Naive thymus-derived CD4-positive, alpha-beta T cell (primary cell): ENCODE measurements at regions of chr3 and their contacts with region 1.

Region 1: DNA sequence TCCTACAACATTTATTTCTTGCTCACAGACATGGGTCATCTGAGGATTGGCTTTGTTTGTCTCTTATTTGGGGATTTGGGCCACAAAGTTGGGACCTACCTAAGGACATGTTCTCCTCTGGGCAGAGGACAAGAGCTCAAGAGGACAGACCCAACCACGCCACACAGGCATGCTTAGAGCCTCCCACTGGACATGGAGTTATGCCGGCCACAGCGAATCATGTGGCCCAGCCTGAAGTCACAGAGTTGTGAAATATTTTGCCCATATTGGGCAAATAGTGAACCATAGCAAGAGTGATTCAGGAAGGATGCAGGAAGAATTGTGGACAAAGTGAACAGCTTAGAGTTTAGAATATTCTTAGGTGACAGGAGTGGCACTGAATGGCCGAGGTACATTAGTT is 9.9 kb downstream of the TRAK1 start:
- DNase-seq: no peak
- ATAC-seq: peak; percentile 46
- H3K4me3 ChIP-seq: no peak overlapping the region
- H3K4me3 Mint-ChIP-seq: no peak overlapping the region
- H3K27ac ChIP-seq: no peak overlapping the region
- H3K27ac Mint-ChIP-seq: no peak overlapping the region
- H3K4me1 ChIP-seq: no peaks in the 10 kb centered on the region
- H3K4me1 Mint-ChIP-seq: peaks cover 0 to 23% (median 10%) of the 10 kb centered on the region in 7 donors
- H3K27me3 ChIP-seq: no peaks in the 10 kb centered on the region
- H3K27me3 Mint-ChIP-seq: no peaks in the 10 kb centered on the region

Region 2: GRCh38 chr3:41893977-41894376 is 207.1 kb before region 1 on chr3:
- CTCF ChIA-PET with region 1: interaction called, 15 read pairs
- POLR2A ChIA-PET with region 1: no interaction called
- intact Hi-C with region 1: loop called (anchors 1 kb)
- DNase-seq: peak in 6 of 9 donors; percentile 9 to 34 (median 17)
- ATAC-seq: no peak
- H3K4me3 ChIP-seq: no peak overlapping the region
- H3K4me3 Mint-ChIP-seq: no peak overlapping the region
- H3K27ac ChIP-seq: no peak overlapping the region
- H3K27ac Mint-ChIP-seq: no peak overlapping the region
- H3K4me1 ChIP-seq: no peaks in the 10 kb centered on the region
- H3K4me1 Mint-ChIP-seq: peaks cover 0 to 6% (median 0%) of the 10 kb centered on the region in 7 donors
- H3K27me3 ChIP-seq: no peaks in the 10 kb centered on the region
- H3K27me3 Mint-ChIP-seq: no peaks in the 10 kb centered on the region

Region 3: DNA sequence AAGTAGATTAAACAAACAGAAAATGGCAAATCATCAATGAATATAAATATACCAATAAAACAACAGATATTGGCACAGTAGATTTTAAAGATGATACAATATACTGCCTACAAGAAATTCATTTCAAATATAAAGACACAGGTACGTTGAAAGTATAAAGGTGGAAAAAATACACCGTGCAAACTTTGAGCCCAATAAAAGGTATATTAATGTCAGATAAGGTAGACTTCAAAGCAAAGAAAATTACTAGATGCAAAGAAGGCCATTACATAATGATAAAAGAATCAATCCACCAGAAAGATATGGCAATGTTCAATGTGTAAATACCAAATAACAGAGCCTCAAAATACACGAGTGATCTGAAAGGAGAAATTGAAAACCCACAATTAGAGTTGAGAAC is 367.1 kb after region 1 on chr3:
- CTCF ChIA-PET with region 1: no interaction called
- POLR2A ChIA-PET with region 1: no interaction called
- intact Hi-C with region 1: no loop called
- DNase-seq: no peak
- ATAC-seq: no peak
- H3K4me3 ChIP-seq: no peak overlapping the region
- H3K4me3 Mint-ChIP-seq: no peak overlapping the region
- H3K27ac ChIP-seq: no peak overlapping the region
- H3K27ac Mint-ChIP-seq: no peak overlapping the region
- H3K4me1 ChIP-seq: no peaks in the 10 kb centered on the region
- H3K4me1 Mint-ChIP-seq: no peaks in the 10 kb centered on the region
- H3K27me3 ChIP-seq: no peaks in the 10 kb centered on the region
- H3K27me3 Mint-ChIP-seq: peaks cover 0 to 6% (median 0%) of the 10 kb centered on the region in 5 donors